ENCODE measurements at regions of chr11 and their contacts with region 1.

Region 1: DNA sequence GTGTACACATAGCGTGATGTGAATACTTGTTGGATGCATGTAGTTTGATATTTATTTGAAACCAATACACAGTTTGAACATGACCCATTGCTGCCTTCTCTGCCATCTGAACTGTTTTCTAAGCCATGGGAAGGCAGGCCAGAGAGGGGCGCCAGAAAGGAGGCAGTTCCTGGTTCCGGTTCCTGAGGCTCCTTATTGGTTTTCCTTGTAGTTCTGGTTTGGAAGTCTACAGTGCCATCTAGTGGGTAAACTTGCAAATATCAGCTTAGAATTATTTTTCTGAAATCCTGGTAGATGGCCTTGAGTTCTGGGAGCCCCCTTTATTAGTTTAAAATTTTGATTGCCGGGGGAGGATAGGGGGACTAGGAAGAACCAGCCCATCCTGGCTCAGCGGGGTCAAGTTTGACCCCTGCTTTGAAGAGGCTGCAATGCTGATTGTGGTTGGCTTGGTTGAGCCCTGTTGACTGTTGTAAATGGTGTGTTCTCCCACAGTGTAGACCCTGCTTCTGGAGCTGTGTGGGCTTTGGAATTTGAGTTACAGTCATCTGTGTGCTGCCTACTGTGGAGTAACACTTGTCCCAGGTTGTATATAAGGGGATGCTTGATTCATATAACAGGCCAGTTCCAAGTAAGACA is 48.4 kb downstream of the GRAMD1B start:
- DNase-seq: peak; percentile 30
- H3K4me3 Mint-ChIP-seq: no peak overlapping the region
- H3K27ac Mint-ChIP-seq: no peak overlapping the region
- H3K4me1 Mint-ChIP-seq: no peaks in the 10 kb centered on the region
- H3K27me3 Mint-ChIP-seq: peaks cover 49% of the 10 kb centered on the region
- CTCF ChIP-seq: no peak

Region 2: DNA sequence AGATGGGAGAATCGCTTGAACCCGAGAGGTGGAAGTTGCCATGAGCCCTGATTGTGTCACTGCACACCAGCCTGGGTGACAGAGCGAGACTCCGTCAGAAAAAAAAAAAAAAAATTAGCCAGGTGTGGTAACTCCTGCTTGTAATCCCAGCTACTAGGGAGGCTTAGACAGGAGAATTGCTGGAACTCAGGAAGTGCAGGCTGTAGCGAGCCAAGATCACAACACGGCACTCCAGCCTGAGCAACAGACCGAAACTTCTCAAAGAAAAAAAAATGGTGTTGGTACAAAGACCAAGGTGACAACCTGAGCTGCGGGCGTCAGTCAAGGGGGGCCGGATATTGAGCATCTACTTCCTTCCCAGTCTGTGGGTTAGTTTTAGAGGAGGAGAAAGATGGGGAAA is 368.1 kb before region 1 on chr11:
- CTCF ChIA-PET with region 1: no interaction called
- intact Hi-C with region 1: loop called (anchors 5 kb)
- DNase-seq: no peak
- H3K4me3 Mint-ChIP-seq: no peak overlapping the region
- H3K27ac Mint-ChIP-seq: no peak overlapping the region
- H3K4me1 Mint-ChIP-seq: no peaks in the 10 kb centered on the region
- H3K27me3 Mint-ChIP-seq: no peaks in the 10 kb centered on the region
- CTCF ChIP-seq: no peak

Region 3: GRCh38 chr11:123301696-123302400 is 176.6 kb before region 1 on chr11:
- CTCF ChIA-PET with region 1: no interaction called
- intact Hi-C with region 1: loop called (anchors 1 kb)
- DNase-seq: peak; percentile 61
- H3K4me3 Mint-ChIP-seq: peak overlapping the region; percentile 24
- H3K27ac Mint-ChIP-seq: no peak overlapping the region
- H3K4me1 Mint-ChIP-seq: no peaks in the 10 kb centered on the region
- H3K27me3 Mint-ChIP-seq: peaks cover 48% of the 10 kb centered on the region
- CTCF ChIP-seq: peak; percentile 53

Region 4: DNA sequence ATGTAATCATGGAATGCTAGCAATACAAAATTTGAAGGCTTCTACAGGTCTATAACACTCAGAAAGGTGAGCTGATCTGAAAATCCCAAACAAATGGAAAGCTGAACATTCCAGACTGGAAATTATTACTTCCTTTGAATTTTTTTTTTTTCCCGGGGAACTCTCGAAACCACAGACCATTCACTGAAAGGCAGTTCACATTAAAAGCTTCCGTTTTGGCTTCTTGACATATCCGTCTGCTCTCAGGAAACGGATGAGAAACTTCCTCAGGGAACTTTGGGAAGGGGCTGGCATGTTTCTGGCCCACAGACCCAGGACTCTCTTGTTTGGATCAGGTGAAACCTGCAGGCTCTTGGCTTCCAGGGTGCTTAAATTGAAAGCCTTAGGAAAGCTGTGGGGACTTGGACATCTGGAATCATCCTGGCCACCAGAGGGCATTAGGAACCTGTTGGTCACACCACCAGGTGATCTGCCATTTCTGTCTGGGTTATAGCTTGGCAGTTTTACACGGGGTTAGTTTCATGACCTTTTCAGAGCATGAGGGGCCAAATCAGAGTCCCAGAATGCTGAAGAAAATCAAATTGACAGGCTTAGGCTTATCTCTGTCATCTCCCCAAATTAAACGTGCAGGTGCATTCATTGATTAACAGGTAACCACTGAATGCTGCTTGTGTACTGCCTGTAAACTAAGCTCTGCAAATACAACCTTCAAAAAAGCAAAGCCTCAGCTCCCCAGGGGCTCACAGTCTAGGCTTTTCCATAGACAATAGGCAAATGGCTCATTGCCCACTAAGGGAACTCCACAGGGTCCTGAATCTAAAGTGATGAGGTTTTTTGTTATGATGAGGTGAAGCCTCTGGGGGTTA is 71.1 kb before region 1 on chr11:
- CTCF ChIA-PET with region 1: interaction called, 36 read pairs
- intact Hi-C with region 1: loop called (anchors 1 kb)
- DNase-seq: peak; percentile 59
- H3K4me3 Mint-ChIP-seq: no peak overlapping the region
- H3K27ac Mint-ChIP-seq: no peak overlapping the region
- H3K4me1 Mint-ChIP-seq: no peaks in the 10 kb centered on the region
- H3K27me3 Mint-ChIP-seq: peaks cover 42% of the 10 kb centered on the region
- CTCF ChIP-seq: no peak

Measured in Calu3 (cell line).